Testis (tissue), 5 donors: ENCODE measurements at regions of chr5 and their contacts with region 1.

Region 1: GRCh38 chr5:176415952-176416924 is at the start of gene CLTB:
- DNase-seq: peak; percentile 92
- H3K4me3 ChIP-seq: peak within 1 kb of the TSS; percentile 72 to 95
- H3K27ac ChIP-seq: peak within 1 kb of the TSS; percentile 84 to 87
- H3K4me1 ChIP-seq: peaks cover 34% of the 10 kb centered on the region
- H3K27me3 ChIP-seq: no peaks in the 10 kb centered on the region
- CTCF ChIP-seq: peak; percentile 74 to 94 (median 92)
- POLR2A ChIP-seq: peak; percentile 36
- total RNA-seq, gene CLTB: 103 to 107 TPM

Region 2: GRCh38 chr5:176537608-176538504 is 121.6 kb after region 1 on chr5:
- intact Hi-C with region 1: loop called (anchors 10 kb)
- DNase-seq: peak; percentile 100
- H3K4me3 ChIP-seq: peak overlapping the region; percentile 91 to 94
- H3K27ac ChIP-seq: peak overlapping the region; percentile 95 to 99
- H3K4me1 ChIP-seq: peaks cover 43% of the 10 kb centered on the region
- H3K27me3 ChIP-seq: no peaks in the 10 kb centered on the region
- CTCF ChIP-seq: peak in 1 of 3 experiments; percentile 20
- POLR2A ChIP-seq: peak; percentile 58